IMR-90 (cell line): ENCODE measurements at regions of chr1 and their contacts with region 1.

Region 1: GRCh38 chr1:2194898-2195673 is 514 bp upstream of the FAAP20 start:
- DNase-seq: peak; percentile 77
- ATAC-seq: peak; percentile 80
- H3K4me3 ChIP-seq: peak overlapping the region; percentile 57
- H3K27ac ChIP-seq: peak overlapping the region; percentile 95
- H3K4me1 ChIP-seq: peaks cover 32% of the 10 kb centered on the region
- H3K27me3 ChIP-seq: no peaks in the 10 kb centered on the region
- CTCF ChIP-seq: peak; percentile 93
- POLR2A ChIP-seq: peak; percentile 19; the same call in 1 of the 2 replicates
- RAD21 ChIP-seq: peak; percentile 98

Region 2: DNA sequence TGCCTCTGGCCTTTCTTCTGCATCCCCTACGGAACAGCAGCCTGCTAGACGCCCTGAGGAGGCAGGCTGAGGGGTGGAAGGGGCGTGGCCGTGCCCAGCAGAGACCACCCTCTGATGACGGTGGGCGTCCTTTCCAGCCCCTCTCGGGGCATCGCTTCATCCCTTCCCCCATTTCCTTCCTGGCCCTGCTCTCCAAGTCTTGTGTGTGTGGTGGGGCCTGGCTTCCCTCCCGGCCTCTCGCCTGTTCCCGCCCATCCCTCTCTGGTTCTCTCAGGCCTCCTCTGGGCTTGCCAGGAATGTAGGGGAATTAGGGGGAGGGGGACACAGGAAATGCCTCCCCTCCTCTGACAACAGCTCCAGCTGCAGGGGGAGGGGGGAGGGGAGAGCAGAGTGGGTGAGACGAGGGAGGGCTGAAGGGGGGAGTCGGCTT is 84.1 kb after region 1 on chr1:
- CTCF ChIA-PET with region 1: no interaction called
- POLR2A ChIA-PET with region 1: no interaction called
- dilution Hi-C with region 1: no loop called
- in situ Hi-C with region 1: no loop called
- intact Hi-C with region 1: no loop called
- DNase-seq: peak; percentile 94
- ATAC-seq: peak; percentile 88
- H3K4me3 ChIP-seq: no peak overlapping the region
- H3K27ac ChIP-seq: peak overlapping the region; percentile 95
- H3K4me1 ChIP-seq: peaks cover 50% of the 10 kb centered on the region
- H3K27me3 ChIP-seq: no peaks in the 10 kb centered on the region
- CTCF ChIP-seq: no peak
- POLR2A ChIP-seq: no peak
- RAD21 ChIP-seq: no peak

Region 3: GRCh38 chr1:2314803-2315673 is 120.0 kb after region 1 on chr1:
- CTCF ChIA-PET with region 1: interaction called, 3 read pairs
- POLR2A ChIA-PET with region 1: no interaction called
- dilution Hi-C with region 1: no loop called
- in situ Hi-C with region 1: no loop called
- intact Hi-C with region 1: loop called (anchors 5 kb)
- DNase-seq: peak; percentile 39
- ATAC-seq: peak; percentile 65
- H3K4me3 ChIP-seq: peak overlapping the region; percentile 44
- H3K27ac ChIP-seq: peak overlapping the region; percentile 68
- H3K4me1 ChIP-seq: peaks cover 32% of the 10 kb centered on the region
- H3K27me3 ChIP-seq: no peaks in the 10 kb centered on the region
- CTCF ChIP-seq: peak; percentile 47
- POLR2A ChIP-seq: no peak
- RAD21 ChIP-seq: no peak; the same call in 1 of the 2 replicates

Region 4: GRCh38 chr1:2372551-2373490 is 177.7 kb after region 1 on chr1:
- CTCF ChIA-PET with region 1: interaction called, 4 read pairs
- POLR2A ChIA-PET with region 1: no interaction called
- dilution Hi-C with region 1: no loop called
- in situ Hi-C with region 1: loop called (anchors 5 kb)
- intact Hi-C with region 1: no loop called
- DNase-seq: no peak
- ATAC-seq: no peak
- H3K4me3 ChIP-seq: no peak overlapping the region
- H3K27ac ChIP-seq: no peak overlapping the region
- H3K4me1 ChIP-seq: no peaks in the 10 kb centered on the region
- H3K27me3 ChIP-seq: no peaks in the 10 kb centered on the region
- CTCF ChIP-seq: no peak
- POLR2A ChIP-seq: no peak
- RAD21 ChIP-seq: no peak

Region 5: GRCh38 chr1:2381741-2382620 is 186.9 kb after region 1 on chr1:
- CTCF ChIA-PET with region 1: interaction called, 51 read pairs
- POLR2A ChIA-PET with region 1: interaction called, 3 read pairs
- dilution Hi-C with region 1: no loop called
- in situ Hi-C with region 1: no loop called
- intact Hi-C with region 1: loop called (anchors 1 kb)
- DNase-seq: peak; percentile 70
- ATAC-seq: peak; percentile 99
- H3K4me3 ChIP-seq: no peak overlapping the region
- H3K27ac ChIP-seq: no peak overlapping the region
- H3K4me1 ChIP-seq: no peaks in the 10 kb centered on the region
- H3K27me3 ChIP-seq: no peaks in the 10 kb centered on the region
- CTCF ChIP-seq: peak; percentile 97
- POLR2A ChIP-seq: no peak
- RAD21 ChIP-seq: peak; percentile 99

Region 6: GRCh38 chr1:2525920-2526823 is 331.1 kb after region 1 on chr1 and contains the start of gene PANK4:
- CTCF ChIA-PET with region 1: no interaction called
- POLR2A ChIA-PET with region 1: no interaction called
- dilution Hi-C with region 1: no loop called
- in situ Hi-C with region 1: loop called (anchors 25 kb)
- intact Hi-C with region 1: no loop called
- DNase-seq: peak; percentile 93
- ATAC-seq: peak; percentile 96
- H3K4me3 ChIP-seq: peak within 1 kb of the TSS; percentile 99
- H3K27ac ChIP-seq: peak within 1 kb of the TSS; percentile 97
- H3K4me1 ChIP-seq: peaks cover 25% of the 10 kb centered on the region
- H3K27me3 ChIP-seq: peaks cover 21% of the 10 kb centered on the region; the same call in 1 of the 2 replicates
- CTCF ChIP-seq: no peak
- POLR2A ChIP-seq: peak; percentile 93
- RAD21 ChIP-seq: no peak
- total RNA-seq, gene PANK4: 14.0 and 15.3 TPM in 2 replicates

Region 7: GRCh38 chr1:3156936-3157335 is 961.9 kb after region 1 on chr1:
- CTCF ChIA-PET with region 1: no interaction called
- POLR2A ChIA-PET with region 1: no interaction called
- dilution Hi-C with region 1: no loop called
- in situ Hi-C with region 1: no loop called
- intact Hi-C with region 1: no loop called
- DNase-seq: no peak
- ATAC-seq: no peak
- H3K4me3 ChIP-seq: no peak overlapping the region
- H3K27ac ChIP-seq: no peak overlapping the region
- H3K4me1 ChIP-seq: no peaks in the 10 kb centered on the region
- H3K27me3 ChIP-seq: no peaks in the 10 kb centered on the region
- CTCF ChIP-seq: no peak
- POLR2A ChIP-seq: no peak
- RAD21 ChIP-seq: no peak